Ovary (tissue), 10 donors: ENCODE measurements at regions of chr2 and their contacts with region 1.

Region 1: GRCh38 chr2:42086500-42086953 is 38.7 kb downstream of the PKDCC start:
- DNase-seq: peak in 3 of 5 donors; percentile 41 to 68 (median 45)
- H3K4me3 ChIP-seq: no peak overlapping the region
- H3K27ac ChIP-seq: no peak overlapping the region
- H3K4me1 ChIP-seq: peaks cover 8% of the 10 kb centered on the region
- H3K27me3 ChIP-seq: no peaks in the 10 kb centered on the region
- CTCF ChIP-seq: peak; percentile 60 to 87 (median 83)
- EP300 ChIP-seq: no peak
- POLR2A ChIP-seq: no peak

Region 2: GRCh38 chr2:41853427-41854216 is 232.9 kb before region 1 on chr2:
- intact Hi-C with region 1: loop called (anchors 1 to 5 kb)
- DNase-seq: peak in 4 of 5 donors; percentile 54 to 79 (median 66)
- H3K4me3 ChIP-seq: no peak overlapping the region
- H3K27ac ChIP-seq: no peak overlapping the region
- H3K4me1 ChIP-seq: no peaks in the 10 kb centered on the region
- H3K27me3 ChIP-seq: no peaks in the 10 kb centered on the region
- CTCF ChIP-seq: peak; percentile 52 to 84 (median 76)
- EP300 ChIP-seq: no peak
- POLR2A ChIP-seq: no peak

Region 3: DNA sequence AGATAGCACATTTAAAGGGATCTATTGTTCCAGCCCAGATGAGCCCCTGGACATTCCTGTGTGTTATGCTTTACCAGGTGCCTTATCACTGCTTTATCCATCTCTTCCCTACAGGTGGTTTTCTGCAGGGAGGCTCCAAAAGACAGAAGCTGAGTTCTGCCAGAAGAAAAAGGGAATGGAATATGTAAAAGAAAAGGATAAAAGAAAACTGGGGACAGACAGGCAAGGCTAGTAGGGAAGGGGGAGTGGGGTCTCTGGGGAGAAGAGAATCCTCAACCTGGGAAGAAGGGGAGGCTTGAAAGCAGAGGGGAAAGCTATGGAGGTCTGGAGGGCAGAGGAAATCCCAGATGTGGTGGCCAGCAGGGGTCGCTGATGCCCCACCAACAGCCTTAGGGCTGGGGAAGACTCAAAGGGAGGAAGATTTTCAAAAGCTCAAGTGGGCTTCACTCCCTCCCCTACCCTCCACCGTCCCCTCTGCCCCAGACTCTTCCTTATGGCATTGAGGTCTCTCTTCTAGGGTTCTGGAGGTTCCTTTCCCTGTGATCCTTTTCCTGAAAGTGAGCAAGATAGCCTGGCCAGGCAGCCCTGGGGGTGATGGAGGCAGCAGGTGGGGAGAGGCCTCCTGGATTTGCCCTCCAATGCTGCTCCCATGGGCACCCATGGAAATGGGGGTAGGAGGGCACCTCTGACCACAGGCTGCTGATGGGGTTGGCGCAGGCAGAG is 216.8 kb before region 1 on chr2:
- intact Hi-C with region 1: loop called (anchors 2 to 5 kb)
- DNase-seq: peak; percentile 76 to 92 (median 89)
- H3K4me3 ChIP-seq: no peak overlapping the region
- H3K27ac ChIP-seq: peak overlapping the region; percentile 1 to 14
- H3K4me1 ChIP-seq: peaks cover 10% of the 10 kb centered on the region
- H3K27me3 ChIP-seq: no peaks in the 10 kb centered on the region
- CTCF ChIP-seq: peak; percentile 76 to 85 (median 79)
- EP300 ChIP-seq: no peak
- POLR2A ChIP-seq: peak; percentile 1

Region 4: GRCh38 chr2:41906338-41906725 is 180.2 kb before region 1 on chr2:
- intact Hi-C with region 1: no loop called
- DNase-seq: no peak
- H3K4me3 ChIP-seq: no peak overlapping the region
- H3K27ac ChIP-seq: no peak overlapping the region
- H3K4me1 ChIP-seq: peaks cover 17% of the 10 kb centered on the region
- H3K27me3 ChIP-seq: no peaks in the 10 kb centered on the region
- CTCF ChIP-seq: no peak
- EP300 ChIP-seq: no peak
- POLR2A ChIP-seq: no peak